HEK293 (cell line): ENCODE measurements at regions of chr17 and their contacts with region 1.

Region 1: DNA sequence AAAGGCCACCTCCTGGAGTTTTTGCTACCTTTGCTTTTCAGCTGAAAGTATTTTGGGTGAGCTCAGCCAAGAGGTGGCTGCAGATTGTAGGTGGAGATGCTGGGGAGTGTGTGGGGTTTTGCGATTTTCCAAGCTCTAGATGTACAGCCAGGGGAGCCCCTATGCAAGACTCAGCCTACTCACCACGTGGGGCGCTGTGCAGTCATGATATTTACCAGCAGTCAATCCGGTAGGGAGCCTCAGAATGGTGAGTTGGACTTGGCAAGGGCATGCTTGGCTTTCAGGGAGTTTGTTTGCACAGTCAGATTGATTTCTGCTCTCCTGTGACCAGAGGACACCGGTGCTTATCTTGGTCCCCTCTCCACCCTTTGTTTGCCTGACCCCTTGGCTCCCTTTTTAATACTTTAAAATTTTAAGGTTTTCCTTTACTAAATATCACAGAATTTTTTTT is 175.3 kb downstream of the UTP18 start:
- H3K4me3 ChIP-seq: no peak overlapping the region
- H3K27ac ChIP-seq: no peak overlapping the region
- H3K4me1 ChIP-seq: peaks cover 6% of the 10 kb centered on the region
- CTCF ChIP-seq: peak; percentile 80

Region 2: DNA sequence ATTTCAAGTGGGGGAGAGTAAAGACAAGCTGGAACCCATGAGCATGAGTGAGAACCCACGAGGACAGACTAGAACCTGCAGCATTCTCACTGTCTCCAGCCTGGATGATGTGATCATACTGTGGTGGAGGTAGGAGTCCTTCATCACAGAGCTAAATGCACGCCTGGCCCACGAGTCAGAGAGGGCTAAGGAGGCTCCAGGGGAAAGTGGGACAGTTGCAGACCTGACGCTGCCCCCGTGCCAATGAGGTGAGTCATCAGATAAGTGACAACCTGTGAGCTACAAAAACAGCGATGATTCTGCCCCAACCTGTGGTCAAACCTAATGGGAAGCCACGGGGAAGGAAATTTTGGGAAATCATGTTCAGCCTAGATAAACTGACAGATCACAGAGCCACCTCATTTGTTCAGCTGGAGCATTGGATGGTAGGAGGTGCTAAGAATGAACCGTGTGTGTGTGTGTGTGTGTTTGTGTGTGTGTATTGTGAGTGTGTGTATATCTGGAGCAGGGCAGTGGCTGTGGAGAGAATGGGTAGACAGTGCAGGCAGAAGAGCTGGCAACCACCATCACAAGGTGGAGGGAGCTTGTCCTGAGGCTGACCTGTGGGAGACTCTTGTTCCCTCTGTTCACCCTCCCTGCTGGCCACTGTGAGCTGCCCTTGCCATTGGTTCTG is 43.5 kb before region 1 on chr17:
- CTCF ChIA-PET with region 1: interaction called, 12 read pairs
- POLR2A ChIA-PET with region 1: no interaction called
- H3K4me3 ChIP-seq: no peak overlapping the region
- H3K27ac ChIP-seq: no peak overlapping the region
- H3K4me1 ChIP-seq: no peaks in the 10 kb centered on the region
- CTCF ChIP-seq: no peak

Region 3: GRCh38 chr17:51423421-51424154 is 12.1 kb before region 1 on chr17:
- CTCF ChIA-PET with region 1: interaction called, 29 read pairs
- POLR2A ChIA-PET with region 1: interaction called, 12 read pairs
- H3K4me3 ChIP-seq: no peak overlapping the region
- H3K27ac ChIP-seq: no peak overlapping the region
- H3K4me1 ChIP-seq: no peaks in the 10 kb centered on the region
- CTCF ChIP-seq: no peak

Region 4: DNA sequence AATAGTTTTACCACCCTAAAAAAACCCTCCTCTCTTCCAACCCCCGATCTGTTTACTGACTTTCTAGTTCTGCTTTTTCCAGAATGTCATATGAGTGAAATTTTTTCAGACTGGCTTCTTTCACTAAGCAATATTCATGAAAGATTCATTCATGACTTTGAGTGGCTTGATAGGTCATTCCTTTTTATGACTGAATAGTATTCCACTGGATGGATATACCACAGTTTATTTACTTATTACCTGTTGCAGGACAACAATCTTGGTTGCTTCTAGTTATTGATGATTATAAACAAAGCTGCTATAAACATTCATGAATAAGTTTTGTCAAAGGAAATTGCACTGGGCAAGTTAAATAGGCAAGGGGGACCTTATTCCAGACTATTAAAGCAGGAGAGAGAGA is 88.9 kb after region 1 on chr17:
- CTCF ChIA-PET with region 1: no interaction called
- POLR2A ChIA-PET with region 1: no interaction called
- H3K4me3 ChIP-seq: no peak overlapping the region
- H3K27ac ChIP-seq: no peak overlapping the region
- H3K4me1 ChIP-seq: no peaks in the 10 kb centered on the region
- CTCF ChIP-seq: no peak

Region 5: DNA sequence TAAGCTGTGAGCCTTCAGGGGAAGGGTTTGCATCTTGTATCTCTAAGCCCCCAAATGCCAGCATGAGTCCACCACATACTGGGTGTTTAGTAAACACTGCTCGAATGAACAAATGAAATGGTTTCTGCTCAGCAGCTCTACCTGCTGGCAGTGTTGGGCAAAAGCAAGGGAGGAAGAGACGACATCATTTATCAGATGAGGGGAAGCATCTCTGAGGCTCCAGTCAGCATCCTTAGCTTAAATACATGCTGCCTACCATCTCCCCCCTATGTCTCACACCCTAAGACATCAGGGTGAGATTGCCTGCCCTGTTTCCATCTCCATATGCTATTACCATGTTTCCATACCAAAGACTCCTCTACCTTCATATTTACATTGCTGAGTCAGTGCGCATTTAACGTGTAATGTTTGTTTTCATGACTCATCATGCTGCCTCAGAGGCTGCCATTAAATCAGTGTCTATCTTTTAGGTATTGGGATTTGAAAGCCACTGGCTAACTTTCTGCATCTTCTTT is 204.5 kb after region 1 on chr17:
- CTCF ChIA-PET with region 1: interaction called, 12 read pairs
- POLR2A ChIA-PET with region 1: no interaction called
- H3K4me3 ChIP-seq: no peak overlapping the region
- H3K27ac ChIP-seq: no peak overlapping the region
- H3K4me1 ChIP-seq: peaks cover 17% of the 10 kb centered on the region
- CTCF ChIP-seq: peak; percentile 53; the same call in 1 of the 2 replicates